Head of caudate nucleus (tissue), 42 donors: ENCODE measurements at regions of chr17 and their contacts with region 1.

Region 1: DNA sequence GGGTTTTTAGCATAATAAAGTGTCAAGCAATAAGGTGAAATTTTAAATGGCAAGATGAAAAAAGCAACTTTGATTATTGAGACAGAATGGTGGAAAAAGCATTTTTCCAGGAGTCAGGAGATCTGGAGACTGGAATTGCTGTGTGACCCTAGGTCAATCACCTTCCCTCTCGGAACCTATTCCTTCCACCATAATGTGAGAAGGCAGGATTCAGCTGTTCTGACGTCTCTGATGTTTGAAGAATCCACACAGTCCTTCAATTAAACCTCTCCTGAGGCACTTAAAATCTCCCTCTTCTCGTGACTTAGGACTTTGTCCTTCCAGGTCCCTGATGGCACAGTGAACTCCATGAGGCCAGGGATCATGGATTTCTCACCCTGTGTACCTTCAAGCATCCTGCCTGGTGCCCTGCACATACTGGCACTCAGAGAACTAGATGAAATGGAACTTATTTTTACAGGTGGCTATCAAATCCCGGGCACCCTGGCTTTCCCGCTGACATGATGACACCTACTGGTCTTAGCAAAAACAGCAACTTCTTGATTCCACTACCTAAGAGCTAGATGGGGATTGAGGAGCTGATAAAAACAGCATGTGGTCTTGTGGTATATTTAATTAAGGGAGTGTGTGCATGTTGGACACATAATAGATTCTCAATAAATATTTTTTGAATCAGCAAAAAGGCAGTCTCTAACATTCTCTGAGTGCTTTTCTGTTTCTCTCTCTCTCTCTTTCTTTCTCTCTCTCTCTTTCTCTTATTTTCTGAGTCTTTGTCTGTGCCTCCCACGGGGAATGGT is 2.3 kb upstream of the CCDC182 start:
- DNase-seq: peak in 41 of 42 donors; percentile 18 to 84 (median 52)

Region 2: DNA sequence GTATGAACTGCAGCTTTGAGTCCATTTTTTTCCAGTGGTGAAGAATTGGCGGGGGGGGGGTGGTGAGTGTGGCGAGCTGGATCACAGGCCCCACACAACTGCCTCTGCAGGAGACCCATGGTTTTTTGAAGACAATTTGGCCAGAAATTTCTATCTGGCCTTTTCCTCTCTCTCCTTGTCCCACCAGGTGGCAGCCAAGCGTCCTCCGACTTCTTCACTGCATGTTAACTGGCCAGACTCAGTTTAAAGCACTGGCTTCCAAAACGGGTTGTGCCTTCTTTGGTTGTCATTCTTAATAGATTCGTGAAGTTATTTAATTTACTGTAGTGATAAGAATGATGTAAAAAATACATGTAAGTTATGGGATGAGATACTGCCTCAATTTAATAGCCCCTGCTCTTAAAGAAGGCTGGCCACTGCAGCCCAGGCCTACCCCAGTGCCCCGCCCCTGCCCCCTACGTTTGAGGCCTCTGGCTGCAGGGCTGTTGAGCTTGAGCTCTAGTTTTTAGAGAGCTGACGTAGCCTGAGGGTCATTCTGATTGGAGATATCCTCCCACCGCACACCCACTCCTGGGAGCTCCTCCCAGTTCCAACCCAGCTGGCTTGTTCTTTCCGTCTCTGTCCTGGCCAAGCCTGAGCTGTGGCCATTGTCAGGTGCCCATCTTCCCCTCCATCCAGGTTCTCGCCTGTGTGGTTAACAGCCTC is 625.9 kb before region 1 on chr17:
- intact Hi-C with region 1: loop called (anchors 10 kb)
- DNase-seq: peak in 37 of 42 donors; percentile 21 to 79 (median 54)

Region 3: DNA sequence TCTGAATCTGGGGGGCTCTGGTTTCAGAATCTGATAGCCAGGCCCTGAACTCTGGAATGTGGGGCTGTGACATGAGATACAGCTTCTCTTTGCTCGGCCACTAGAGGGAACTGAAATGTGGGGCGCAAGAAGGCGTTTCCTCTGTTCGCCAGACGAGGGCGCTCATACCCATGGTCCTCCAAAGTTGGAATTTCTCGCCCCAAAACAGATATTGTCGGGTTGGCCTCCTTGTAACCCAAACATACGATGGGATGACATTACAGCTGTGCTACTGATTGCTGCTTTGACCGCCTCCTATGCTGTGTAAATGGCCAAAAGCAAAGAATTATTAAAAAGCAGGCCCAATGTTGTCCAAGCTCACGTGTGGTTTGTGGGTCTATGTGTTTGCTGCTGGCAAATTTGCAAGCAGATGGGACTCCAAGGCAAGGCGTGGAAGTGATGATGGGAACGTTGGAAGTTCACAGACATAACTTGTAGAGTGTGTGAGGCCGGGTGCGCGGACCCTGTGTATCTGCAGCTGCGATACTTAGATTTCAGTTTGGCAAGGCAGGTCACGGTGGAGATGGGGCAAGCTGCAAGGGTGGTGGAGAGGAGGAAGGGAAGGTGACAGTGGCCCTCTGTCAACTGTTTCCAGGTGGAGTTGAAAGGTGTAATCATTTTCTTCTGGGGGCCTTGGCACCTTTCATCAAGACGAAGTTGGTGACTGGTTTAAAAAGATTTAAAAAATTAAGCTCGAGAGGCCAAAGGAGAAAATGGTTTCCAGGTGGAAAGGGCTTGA is 504.1 kb before region 1 on chr17:
- intact Hi-C with region 1: loop called (anchors 10 kb)
- DNase-seq: peak; percentile 8 to 87 (median 66)

Region 4: GRCh38 chr17:57577751-57578607 is 169.4 kb before region 1 on chr17:
- intact Hi-C with region 1: no loop called
- DNase-seq: peak in 24 of 42 donors; percentile 21 to 81 (median 46)

Region 5: GRCh38 chr17:57761887-57762286 is 14.5 kb after region 1 on chr17:
- intact Hi-C with region 1: no loop called
- DNase-seq: no peak

Region 6: DNA sequence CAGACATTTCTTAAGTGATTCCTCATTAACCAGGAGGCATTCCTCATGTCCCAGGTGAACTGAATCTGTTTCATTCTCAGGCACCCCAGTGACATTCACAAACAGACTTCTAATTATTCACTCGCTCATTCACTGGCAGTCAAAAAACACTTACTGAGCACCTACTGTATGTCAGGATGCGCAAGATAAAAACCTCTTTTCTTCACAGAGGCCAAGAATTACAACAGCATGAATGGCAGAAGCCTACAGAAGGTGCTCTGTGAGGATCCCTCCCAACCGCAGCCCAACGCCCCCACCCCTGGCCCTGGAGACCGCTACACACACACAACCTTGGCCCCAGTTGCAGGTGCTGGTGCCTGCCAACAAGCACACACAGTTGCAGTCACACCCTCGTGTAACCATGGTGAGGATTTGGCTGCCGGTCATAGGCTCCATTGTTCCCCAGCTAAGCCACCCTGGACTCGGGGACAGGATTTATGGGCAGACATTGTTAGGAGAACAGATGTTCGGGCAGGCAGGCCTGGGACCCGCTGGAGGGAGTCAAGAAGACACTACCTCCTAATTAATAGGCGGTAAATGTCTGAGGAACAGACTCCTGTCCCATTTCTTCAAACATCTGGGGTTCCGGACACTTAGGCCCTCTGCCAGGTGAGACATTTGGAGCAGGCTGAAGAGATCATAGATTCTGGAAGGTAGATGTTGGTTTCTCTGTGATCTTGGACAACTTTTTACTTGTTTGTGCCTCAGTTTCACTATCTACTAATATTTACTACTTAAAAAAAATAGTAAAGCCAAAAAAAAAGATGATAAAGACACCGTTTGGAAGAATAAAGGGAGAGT is 164.6 kb after region 1 on chr17:
- intact Hi-C with region 1: no loop called
- DNase-seq: peak; percentile 80 to 97 (median 92)